B cell (primary cell): ENCODE measurements at regions of chr11 and their contacts with region 1.

Region 1: GRCh38 chr11:10623797-10624761 is 55.6 kb upstream of the LYVE1 start:
- DNase-seq: no peak
- ATAC-seq: no peak
- H3K4me3 ChIP-seq: no peak overlapping the region
- H3K4me3 Mint-ChIP-seq: peak overlapping the region; percentile 53
- H3K27ac ChIP-seq: peak overlapping the region; percentile 79 to 88
- H3K27ac Mint-ChIP-seq: peak overlapping the region; percentile 98
- H3K4me1 ChIP-seq: peaks cover 47 to 69% of the 10 kb centered on the region in 2 donors
- H3K4me1 Mint-ChIP-seq: peaks cover 77% of the 10 kb centered on the region
- H3K27me3 ChIP-seq: no peaks in the 10 kb centered on the region
- H3K27me3 Mint-ChIP-seq: no peaks in the 10 kb centered on the region
- CTCF ChIP-seq: no peak

Region 2: DNA sequence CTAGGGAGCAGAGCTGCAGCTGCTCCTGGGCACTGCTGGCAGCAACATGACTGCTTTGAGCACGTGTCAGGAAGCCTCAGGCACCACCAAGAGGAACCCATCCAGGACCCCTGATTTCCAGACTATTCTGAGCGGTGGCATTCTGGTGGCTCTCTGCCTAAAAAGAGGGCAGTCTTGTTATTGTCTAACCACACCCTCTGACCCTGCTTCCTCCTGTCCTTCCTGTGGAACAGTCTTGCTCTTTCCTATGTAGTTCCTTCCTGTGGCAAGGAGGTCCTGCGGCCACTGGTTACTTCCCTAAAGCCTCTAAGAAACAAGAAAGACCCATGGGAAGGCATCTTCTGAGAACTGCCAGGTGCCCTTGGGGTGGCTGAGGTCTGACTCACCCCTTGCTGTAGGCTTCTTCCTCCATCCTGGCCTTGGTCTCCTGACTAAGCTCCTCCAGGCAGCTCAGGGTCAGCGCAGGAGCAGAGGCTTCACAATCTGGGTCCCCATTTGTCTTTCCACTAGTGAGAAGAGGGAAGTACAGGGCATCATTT is 42.5 kb before region 1 on chr11:
- CTCF ChIA-PET with region 1: interaction called, 3 read pairs
- POLR2A ChIA-PET with region 1: no interaction called
- intact Hi-C with region 1: loop called (anchors 5 kb)
- DNase-seq: peak; percentile 35
- ATAC-seq: peak; percentile 65
- H3K4me3 ChIP-seq: peak overlapping the region in 1 of 5 experiments; percentile 12
- H3K4me3 Mint-ChIP-seq: peak overlapping the region; percentile 20
- H3K27ac ChIP-seq: peak overlapping the region; percentile 31 to 70
- H3K27ac Mint-ChIP-seq: peak overlapping the region; percentile 78
- H3K4me1 ChIP-seq: peaks cover 55 to 67% of the 10 kb centered on the region in 2 donors
- H3K4me1 Mint-ChIP-seq: peaks cover 77% of the 10 kb centered on the region
- H3K27me3 ChIP-seq: no peaks in the 10 kb centered on the region
- H3K27me3 Mint-ChIP-seq: no peaks in the 10 kb centered on the region
- CTCF ChIP-seq: no peak

Region 3: DNA sequence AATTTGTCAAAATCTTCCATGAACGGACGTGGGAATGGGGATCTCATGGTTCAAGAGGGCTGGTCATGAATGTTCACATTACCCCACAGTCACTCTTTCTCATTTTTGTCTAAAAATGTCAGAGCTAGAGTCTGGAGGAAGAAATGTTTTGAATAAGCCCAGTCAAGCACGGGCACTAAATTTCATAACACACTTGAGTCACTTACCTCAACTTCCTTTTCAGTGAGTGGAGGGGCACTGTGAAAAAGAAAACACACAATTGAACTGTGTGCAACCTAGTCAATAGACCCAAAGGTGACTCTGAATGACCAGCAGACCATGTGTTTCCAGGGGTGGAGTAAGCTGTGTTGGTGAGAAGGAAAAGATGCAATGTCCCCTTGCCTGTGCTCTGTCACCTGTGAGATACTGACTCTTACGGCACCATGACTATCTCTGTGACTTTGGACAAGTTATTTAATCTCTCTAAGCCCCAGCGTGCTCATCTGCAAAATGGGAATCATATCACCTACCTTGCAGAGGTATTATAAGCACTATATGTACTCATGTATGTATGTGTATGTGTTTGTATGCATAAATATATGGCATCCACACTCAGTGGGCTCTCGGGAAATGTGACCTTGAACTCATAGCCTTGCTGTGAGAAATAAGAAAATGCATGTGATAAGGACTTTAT is 17.4 kb before region 1 on chr11:
- CTCF ChIA-PET with region 1: interaction called, 42 read pairs
- POLR2A ChIA-PET with region 1: interaction called, 9 read pairs
- intact Hi-C with region 1: loop called (anchors 2 kb)
- DNase-seq: peak; percentile 68
- ATAC-seq: peak; percentile 82
- H3K4me3 ChIP-seq: peak overlapping the region in 4 of 5 experiments; percentile 33 to 74 (median 50)
- H3K4me3 Mint-ChIP-seq: peak overlapping the region; percentile 83
- H3K27ac ChIP-seq: peak overlapping the region; percentile 84 to 91
- H3K27ac Mint-ChIP-seq: peak overlapping the region; percentile 97
- H3K4me1 ChIP-seq: peaks cover 90 to 97% of the 10 kb centered on the region in 2 donors
- H3K4me1 Mint-ChIP-seq: peaks cover 98% of the 10 kb centered on the region
- H3K27me3 ChIP-seq: no peaks in the 10 kb centered on the region
- H3K27me3 Mint-ChIP-seq: no peaks in the 10 kb centered on the region
- CTCF ChIP-seq: no peak

Region 4: GRCh38 chr11:10612216-10612862 is 11.7 kb before region 1 on chr11:
- CTCF ChIA-PET with region 1: interaction called, 42 read pairs
- POLR2A ChIA-PET with region 1: interaction called, 9 read pairs
- intact Hi-C with region 1: loop called (anchors 1 kb)
- DNase-seq: peak; percentile 75
- ATAC-seq: peak; percentile 65
- H3K4me3 ChIP-seq: peak overlapping the region in 1 of 5 experiments; percentile 45
- H3K4me3 Mint-ChIP-seq: peak overlapping the region; percentile 48
- H3K27ac ChIP-seq: peak overlapping the region; percentile 84 to 91
- H3K27ac Mint-ChIP-seq: peak overlapping the region; percentile 97
- H3K4me1 ChIP-seq: peaks cover 80% of the 10 kb centered on the region in 2 donors
- H3K4me1 Mint-ChIP-seq: peaks cover 81% of the 10 kb centered on the region
- H3K27me3 ChIP-seq: no peaks in the 10 kb centered on the region
- H3K27me3 Mint-ChIP-seq: no peaks in the 10 kb centered on the region
- CTCF ChIP-seq: no peak

Region 5: GRCh38 chr11:10641177-10641911 is 17.3 kb after region 1 on chr11:
- CTCF ChIA-PET with region 1: interaction called, 7 read pairs
- POLR2A ChIA-PET with region 1: interaction called, 6 read pairs
- intact Hi-C with region 1: loop called (anchors 1 kb)
- DNase-seq: peak; percentile 77
- ATAC-seq: peak; percentile 87
- H3K4me3 ChIP-seq: peak overlapping the region in 1 of 5 experiments; percentile 35
- H3K4me3 Mint-ChIP-seq: peak overlapping the region; percentile 74
- H3K27ac ChIP-seq: peak overlapping the region; percentile 87 to 88
- H3K27ac Mint-ChIP-seq: peak overlapping the region; percentile 94
- H3K4me1 ChIP-seq: peaks cover 55 to 79% of the 10 kb centered on the region in 2 donors
- H3K4me1 Mint-ChIP-seq: peaks cover 81% of the 10 kb centered on the region
- H3K27me3 ChIP-seq: no peaks in the 10 kb centered on the region
- H3K27me3 Mint-ChIP-seq: no peaks in the 10 kb centered on the region
- CTCF ChIP-seq: no peak

Region 6: DNA sequence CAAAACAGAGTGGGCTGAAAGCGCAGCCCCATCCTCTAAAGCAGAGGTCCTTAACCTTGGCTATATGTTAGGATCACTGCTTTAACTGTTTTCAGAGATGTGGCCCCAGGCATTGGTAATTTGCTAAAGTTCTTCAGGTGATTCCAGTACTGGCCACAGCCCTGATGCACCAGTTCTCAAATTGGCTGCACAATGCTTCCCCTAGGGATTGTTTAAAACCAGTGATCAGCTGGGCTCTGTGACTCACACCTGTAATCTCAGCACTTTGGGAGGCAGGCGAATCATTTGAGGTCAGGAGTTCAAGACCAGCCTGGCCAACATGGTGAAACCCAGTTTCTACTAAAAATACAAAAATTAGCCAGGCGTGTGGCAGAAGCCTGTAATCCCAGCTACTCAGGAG is 77.9 kb after region 1 on chr11:
- CTCF ChIA-PET with region 1: no interaction called
- POLR2A ChIA-PET with region 1: no interaction called
- intact Hi-C with region 1: no loop called
- DNase-seq: no peak
- ATAC-seq: no peak
- H3K4me3 ChIP-seq: no peak overlapping the region
- H3K4me3 Mint-ChIP-seq: no peak overlapping the region
- H3K27ac ChIP-seq: no peak overlapping the region
- H3K27ac Mint-ChIP-seq: no peak overlapping the region
- H3K4me1 ChIP-seq: no peaks in the 10 kb centered on the region
- H3K4me1 Mint-ChIP-seq: no peaks in the 10 kb centered on the region
- H3K27me3 ChIP-seq: peaks cover 0 to 5% (median 0%) of the 10 kb centered on the region in 4 experiments
- H3K27me3 Mint-ChIP-seq: no peaks in the 10 kb centered on the region
- CTCF ChIP-seq: no peak

Region 7: DNA sequence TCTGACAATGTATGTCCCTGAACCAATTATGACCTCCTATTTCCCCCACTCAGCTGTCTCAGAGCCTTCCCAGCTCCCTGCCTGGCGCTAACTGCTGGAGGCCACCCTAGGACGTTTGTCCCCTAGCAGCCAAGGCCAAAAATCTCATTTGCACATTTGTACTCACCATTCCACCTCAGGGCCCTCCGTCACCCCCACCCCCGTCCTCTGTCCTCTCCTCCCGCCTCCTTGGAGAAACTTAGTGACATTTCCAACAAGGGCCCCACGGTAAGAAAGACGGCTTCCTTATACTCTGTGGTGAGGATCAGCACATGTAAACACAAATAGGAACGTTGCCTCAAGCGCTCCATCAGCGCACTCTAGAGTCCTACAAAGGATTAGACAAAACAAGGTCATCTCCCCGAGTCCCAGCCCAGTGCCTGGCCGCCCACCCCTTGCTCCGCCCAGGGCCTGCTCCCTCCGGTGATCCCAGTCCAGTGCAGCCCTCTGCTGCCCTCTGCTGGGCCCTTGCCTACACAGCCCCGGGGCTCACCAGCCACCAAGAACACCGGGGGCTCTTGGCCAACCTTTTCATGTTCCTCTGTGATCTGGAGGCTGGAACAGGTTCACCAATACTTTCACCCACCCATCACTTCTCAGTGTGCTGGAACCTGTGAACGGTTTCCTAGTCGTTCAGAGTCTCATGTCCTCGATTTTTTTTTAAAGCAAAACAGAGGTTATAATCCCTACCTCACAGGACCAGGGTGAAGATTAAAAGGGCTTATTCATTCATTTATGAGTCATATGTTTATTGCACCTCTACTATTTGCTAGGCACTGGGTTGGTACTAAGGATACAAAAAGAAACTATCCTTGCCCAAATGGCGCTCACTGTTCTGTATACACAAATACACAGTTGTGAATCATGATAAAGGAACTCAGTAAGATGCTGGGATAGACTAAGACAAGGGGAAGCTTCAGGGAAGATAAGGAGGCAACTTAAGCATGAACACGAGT is 111.7 kb after region 1 on chr11:
- CTCF ChIA-PET with region 1: interaction called, 3 read pairs
- POLR2A ChIA-PET with region 1: interaction called, 15 read pairs
- intact Hi-C with region 1: no loop called
- DNase-seq: peak; percentile 92
- ATAC-seq: peak; percentile 100
- H3K4me3 ChIP-seq: peak overlapping the region in 2 of 5 experiments; percentile 25 to 28
- H3K4me3 Mint-ChIP-seq: peak overlapping the region; percentile 86
- H3K27ac ChIP-seq: peak overlapping the region; percentile 22 to 35
- H3K27ac Mint-ChIP-seq: peak overlapping the region; percentile 95
- H3K4me1 ChIP-seq: peaks cover 7 to 13% of the 10 kb centered on the region in 2 donors
- H3K4me1 Mint-ChIP-seq: peaks cover 13% of the 10 kb centered on the region
- H3K27me3 ChIP-seq: no peaks in the 10 kb centered on the region
- H3K27me3 Mint-ChIP-seq: no peaks in the 10 kb centered on the region
- CTCF ChIP-seq: peak; percentile 94